Posterior vena cava (tissue), 2 donors: ENCODE measurements at regions of chr1 and their contacts with region 1.

Region 1: DNA sequence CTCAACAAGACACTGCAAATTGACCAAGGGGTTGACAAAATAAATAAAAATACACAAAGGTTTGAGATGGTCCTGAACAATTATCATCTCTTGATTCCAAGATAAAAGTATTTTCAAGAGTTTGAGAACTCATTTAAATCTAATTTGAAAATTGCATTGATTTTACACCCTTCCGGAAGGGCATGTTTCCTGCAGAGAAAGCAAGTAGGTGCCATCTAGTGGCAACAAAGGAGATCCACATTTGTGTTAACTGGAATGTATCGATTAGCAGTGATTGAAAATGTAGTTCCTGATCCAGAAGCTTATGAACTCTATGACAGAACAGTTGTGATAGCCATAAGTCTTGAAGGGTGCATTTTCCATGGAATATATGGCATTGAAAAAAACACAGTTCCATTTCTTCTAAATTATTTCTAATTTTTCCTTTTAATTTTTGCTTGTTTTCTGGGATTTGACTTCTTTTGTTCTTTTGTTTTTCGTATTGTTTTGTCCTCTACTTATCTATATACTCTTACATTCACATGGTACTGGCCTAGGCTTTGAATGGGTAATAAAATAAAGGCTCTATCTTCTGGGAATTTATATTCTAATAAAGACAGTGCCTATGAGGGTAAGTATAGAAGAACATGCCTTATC is 143.7 kb downstream of the DNM3 start:
- DNase-seq: no peak

Region 2: DNA sequence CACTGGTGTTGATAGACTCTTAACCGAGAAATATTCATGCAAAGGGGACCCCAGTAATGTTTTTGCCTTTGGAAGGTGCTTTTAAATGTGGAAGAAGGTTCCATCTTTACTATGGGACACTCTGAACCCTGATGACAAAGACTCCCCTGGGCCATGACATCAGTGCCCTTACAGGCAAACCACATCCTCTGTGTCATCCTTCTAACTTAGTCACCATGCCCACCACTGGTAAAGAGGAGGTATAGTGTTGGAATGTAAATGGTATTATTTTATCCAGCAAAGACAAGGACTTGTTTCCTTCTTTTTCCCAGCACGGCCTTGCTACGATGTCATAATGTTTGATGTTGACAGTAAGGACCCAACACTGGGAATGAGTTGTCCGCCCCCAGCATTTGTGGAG is 190.9 kb before region 1 on chr1:
- intact Hi-C with region 1: loop called in 1 of 2 experiments (anchors 10 kb)
- DNase-seq: no peak

Region 3: GRCh38 chr1:171801487-171801891 is 183.5 kb before region 1 on chr1:
- intact Hi-C with region 1: loop called (anchors 5 to 10 kb)
- DNase-seq: no peak

Region 4: GRCh38 chr1:171940373-171940772 is 44.6 kb before region 1 on chr1:
- intact Hi-C with region 1: no loop called
- DNase-seq: no peak

Region 5: GRCh38 chr1:171965777-171966176 is 19.2 kb before region 1 on chr1:
- intact Hi-C with region 1: no loop called
- DNase-seq: no peak